Caco-2 (cell line): ENCODE measurements at regions of chr13 and their contacts with region 1.

Region 1: DNA sequence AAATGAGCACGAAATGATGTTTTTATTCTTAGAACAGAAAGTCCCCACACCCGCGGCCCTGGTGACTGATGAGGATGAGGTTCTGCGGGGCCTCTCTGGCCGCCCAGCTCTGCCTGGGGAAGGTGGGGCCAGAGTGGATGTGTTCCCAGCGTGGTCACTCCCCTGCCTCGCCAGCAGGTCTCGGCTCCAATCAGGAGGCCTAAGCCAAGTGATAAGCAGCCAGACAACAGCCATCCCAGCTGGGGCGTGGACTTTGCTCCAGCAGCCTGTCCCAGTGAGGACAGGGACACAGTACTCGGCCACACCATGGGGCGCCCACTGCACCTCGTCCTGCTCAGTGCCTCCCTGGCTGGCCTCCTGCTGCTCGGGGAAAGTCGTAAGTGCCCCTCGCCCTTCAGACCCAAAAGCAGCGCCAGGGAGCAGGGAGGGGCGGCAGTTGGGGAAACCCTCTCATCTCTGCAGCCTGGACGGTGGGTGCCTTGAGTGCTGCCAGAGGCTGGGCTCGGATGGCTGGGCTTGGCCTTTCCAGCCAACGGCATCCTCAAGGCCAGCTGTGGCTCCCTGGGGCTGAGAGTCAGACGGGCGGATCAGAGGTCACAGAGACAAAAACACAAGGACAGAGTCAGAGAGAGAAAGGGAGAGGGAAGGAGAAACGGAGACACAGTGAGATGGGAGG is at the start of gene F10:
- DNase-seq: peak; percentile 94 to 95
- H3K4me3 ChIP-seq: peak within 1 kb of the TSS; percentile 64
- H3K4me3 Mint-ChIP-seq: peak within 1 kb of the TSS; percentile 70
- H3K27ac Mint-ChIP-seq: peak within 1 kb of the TSS; percentile 74
- H3K4me1 ChIP-seq: peaks cover 21% of the 10 kb centered on the region
- H3K4me1 Mint-ChIP-seq: peaks cover 9% of the 10 kb centered on the region
- H3K27me3 ChIP-seq: no peaks in the 10 kb centered on the region
- H3K27me3 Mint-ChIP-seq: no peaks in the 10 kb centered on the region
- CTCF ChIP-seq: peak in 1 of 2 experiments; percentile 1
- total RNA-seq, gene F10: 26.3 and 34.3 TPM in 2 replicates

Region 2: DNA sequence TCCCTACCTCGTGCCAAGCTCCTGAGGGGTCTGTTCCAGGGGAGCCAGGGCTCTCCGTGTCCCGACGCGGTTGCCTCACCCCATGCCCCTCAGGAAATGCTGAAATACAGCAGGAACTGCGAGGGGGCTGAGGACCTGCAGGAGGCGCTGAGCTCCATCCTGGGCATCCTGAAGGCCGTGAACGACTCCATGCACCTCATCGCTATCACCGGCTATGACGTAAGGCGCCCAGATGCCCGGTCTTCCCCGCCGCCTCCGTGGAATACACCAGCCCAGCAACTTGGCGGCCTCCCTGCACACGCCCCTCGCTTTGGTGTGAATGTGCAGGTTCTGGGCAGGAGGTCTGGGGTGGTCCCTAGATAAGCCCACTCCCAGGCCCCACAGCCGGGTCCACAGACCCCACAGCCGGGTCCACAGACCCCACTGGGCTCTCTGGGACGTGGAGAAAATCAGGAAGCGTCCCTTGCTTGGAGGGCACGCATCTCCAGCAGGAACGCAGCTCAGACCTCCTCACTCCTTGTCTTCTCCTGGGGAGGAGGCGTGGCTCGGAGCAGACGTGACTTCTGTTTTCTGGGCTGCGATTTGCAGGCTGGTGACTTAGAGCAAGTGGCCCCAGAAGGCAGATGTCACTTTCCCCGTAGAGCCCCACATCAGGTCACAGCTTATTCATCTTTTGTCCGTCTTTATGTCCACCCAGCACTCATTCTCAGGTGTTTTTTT is 36.5 kb before region 1 on chr13:
- CTCF ChIA-PET with region 1: no interaction called
- POLR2A ChIA-PET with region 1: no interaction called
- intact Hi-C with region 1: loop called (anchors 2 kb)
- DNase-seq: no peak
- H3K4me3 ChIP-seq: no peak overlapping the region
- H3K4me3 Mint-ChIP-seq: no peak overlapping the region
- H3K27ac Mint-ChIP-seq: no peak overlapping the region
- H3K4me1 ChIP-seq: 0 out of 2 replicates have a peak, but pooled peaks cover 8% of the 10 kb centered on the region
- H3K4me1 Mint-ChIP-seq: no peaks in the 10 kb centered on the region
- H3K27me3 ChIP-seq: no peaks in the 10 kb centered on the region
- H3K27me3 Mint-ChIP-seq: no peaks in the 10 kb centered on the region
- CTCF ChIP-seq: peak in 1 of 2 experiments; percentile 7

Region 3: GRCh38 chr13:113105032-113105920 is 17.4 kb before region 1 on chr13 and contains the start of gene F7:
- CTCF ChIA-PET with region 1: no interaction called
- POLR2A ChIA-PET with region 1: interaction called, 3 read pairs
- intact Hi-C with region 1: loop called (anchors 1 kb)
- DNase-seq: peak; percentile 94 to 96
- H3K4me3 ChIP-seq: peak within 1 kb of the TSS; percentile 57
- H3K4me3 Mint-ChIP-seq: peak within 1 kb of the TSS; percentile 76
- H3K27ac Mint-ChIP-seq: peak within 1 kb of the TSS; percentile 76
- H3K4me1 ChIP-seq: peaks cover 33% of the 10 kb centered on the region
- H3K4me1 Mint-ChIP-seq: peaks cover 7% of the 10 kb centered on the region
- H3K27me3 ChIP-seq: no peaks in the 10 kb centered on the region
- H3K27me3 Mint-ChIP-seq: no peaks in the 10 kb centered on the region
- CTCF ChIP-seq: peak in 1 of 2 experiments; percentile 5
- total RNA-seq, gene F7: 48.0 and 52.4 TPM in 2 replicates